ENCODE measurements at regions of chr12 and their contacts with region 1.

Region 1: DNA sequence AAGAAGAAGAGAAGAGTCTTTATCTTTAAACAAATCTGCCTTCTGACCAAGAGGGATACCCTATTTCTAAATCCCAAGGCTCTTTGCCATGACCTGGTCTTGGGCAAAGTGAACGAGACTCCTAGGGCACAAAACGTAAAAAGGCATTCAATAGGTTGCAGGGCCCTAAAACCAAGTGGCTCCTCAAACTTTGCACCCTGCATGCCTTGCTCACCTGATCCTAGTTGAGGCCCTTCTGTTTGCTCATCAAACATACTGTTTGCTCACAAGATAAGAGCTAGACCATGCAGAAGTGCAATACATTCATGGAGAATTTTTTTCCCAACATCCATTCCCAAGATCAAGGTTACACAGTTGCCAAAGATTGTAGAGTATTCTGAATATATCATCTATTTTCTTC is 7.9 kb upstream of the PRH1 start:
- DNase-seq: peak; percentile 98
- ATAC-seq: peak; percentile 100
- H3K4me3 ChIP-seq: peak overlapping the region in 2 of 3 experiments; percentile 11 to 19; a peak in 1 of 6 replicates
- H3K27ac ChIP-seq: peak overlapping the region; percentile 93
- H3K4me1 ChIP-seq: peaks cover 44% of the 10 kb centered on the region
- H3K27me3 ChIP-seq: no peaks in the 10 kb centered on the region
- CTCF ChIP-seq: no peak
- EP300 ChIP-seq: peak; percentile 94 to 100; a peak in 3 of 4 replicates
- POLR2A ChIP-seq: peak in 1 of 2 experiments; percentile 50; a peak in 1 of 4 replicates
- RAD21 ChIP-seq: peak; percentile 44

Region 2: GRCh38 chr12:10101042-10101579 is 790.8 kb before region 1 on chr12:
- CTCF ChIA-PET with region 1: no interaction called
- POLR2A ChIA-PET with region 1: no interaction called
- in situ Hi-C with region 1: no loop called
- intact Hi-C with region 1: no loop called
- DNase-seq: no peak
- ATAC-seq: no peak
- H3K4me3 ChIP-seq: no peak overlapping the region
- H3K27ac ChIP-seq: no peak overlapping the region
- H3K4me1 ChIP-seq: no peaks in the 10 kb centered on the region
- H3K27me3 ChIP-seq: no peaks in the 10 kb centered on the region; a peak in 1 of 5 replicates
- CTCF ChIP-seq: no peak
- EP300 ChIP-seq: no peak
- POLR2A ChIP-seq: no peak
- RAD21 ChIP-seq: no peak

Region 3: DNA sequence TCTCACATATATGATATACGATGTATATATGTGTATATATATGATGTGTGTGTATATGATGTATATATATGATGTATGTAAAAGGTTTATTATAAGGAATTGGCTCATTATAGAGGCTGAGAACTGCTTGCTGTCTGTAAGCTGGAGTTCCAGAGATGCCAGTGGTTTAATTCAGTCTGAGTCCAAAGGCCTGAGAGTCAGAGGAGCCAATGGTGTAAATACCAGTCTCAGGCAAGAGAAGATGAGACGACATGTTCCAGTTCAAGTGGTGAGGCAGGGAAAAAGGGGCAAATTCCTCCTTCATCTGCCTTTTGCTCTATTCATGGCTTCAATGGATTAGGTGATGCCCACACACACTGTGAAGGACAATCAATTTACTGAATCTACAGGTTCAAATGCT is 201.0 kb before region 1 on chr12:
- CTCF ChIA-PET with region 1: no interaction called
- POLR2A ChIA-PET with region 1: no interaction called
- in situ Hi-C with region 1: no loop called
- intact Hi-C with region 1: no loop called
- DNase-seq: no peak
- ATAC-seq: no peak
- H3K4me3 ChIP-seq: no peak overlapping the region
- H3K27ac ChIP-seq: no peak overlapping the region
- H3K4me1 ChIP-seq: no peaks in the 10 kb centered on the region
- H3K27me3 ChIP-seq: no peaks in the 10 kb centered on the region
- CTCF ChIP-seq: no peak
- EP300 ChIP-seq: no peak
- POLR2A ChIP-seq: no peak
- RAD21 ChIP-seq: no peak

Region 4: GRCh38 chr12:10749700-10750384 is 142.1 kb before region 1 on chr12:
- CTCF ChIA-PET with region 1: no interaction called
- POLR2A ChIA-PET with region 1: no interaction called
- in situ Hi-C with region 1: no loop called
- intact Hi-C with region 1: no loop called
- DNase-seq: peak; percentile 84
- ATAC-seq: peak; percentile 94
- H3K4me3 ChIP-seq: peak overlapping the region; percentile 29 to 58 (median 42); a peak in 5 of 6 replicates
- H3K27ac ChIP-seq: no peak overlapping the region
- H3K4me1 ChIP-seq: peaks cover 16% of the 10 kb centered on the region; the same call in 1 of the 2 replicates
- H3K27me3 ChIP-seq: no peaks in the 10 kb centered on the region; a peak in 1 of 5 replicates
- CTCF ChIP-seq: peak; percentile 87
- EP300 ChIP-seq: no peak
- POLR2A ChIP-seq: no peak
- RAD21 ChIP-seq: peak; percentile 84

Region 5: GRCh38 chr12:11171145-11171968 is 279.4 kb after region 1 on chr12 and contains the start of gene SMIM10L1:
- CTCF ChIA-PET with region 1: no interaction called
- POLR2A ChIA-PET with region 1: interaction called, 11 read pairs
- in situ Hi-C with region 1: no loop called
- intact Hi-C with region 1: no loop called
- DNase-seq: peak; percentile 89
- ATAC-seq: peak; percentile 100
- H3K4me3 ChIP-seq: peak within 1 kb of the TSS; percentile 84 to 94 (median 84)
- H3K27ac ChIP-seq: peak within 1 kb of the TSS; percentile 95
- H3K4me1 ChIP-seq: peaks cover 48% of the 10 kb centered on the region
- H3K27me3 ChIP-seq: no peaks in the 10 kb centered on the region; a peak in 1 of 5 replicates
- CTCF ChIP-seq: peak; percentile 27
- EP300 ChIP-seq: no peak; a peak in 1 of 4 replicates
- POLR2A ChIP-seq: peak; percentile 80 to 95
- RAD21 ChIP-seq: peak; percentile 54
- total RNA-seq, gene SMIM10L1: 11.8 and 12.5 TPM in 2 replicates